Activated CD8-positive, alpha-beta T cell treated with anti-CD3 and anti-CD28 coated beads, Interleukin-2, amount 10 ng/mL, durations not matched to agents 7 days and 5 days (primary cell): ENCODE measurements at regions of chr14 and their contacts with region 1.

Region 1: GRCh38 chr14:52351233-52352060 is 37.3 kb downstream of the PTGER2 start:
- DNase-seq: peak; percentile 39
- ATAC-seq: peak; percentile 76
- H3K4me3 Mint-ChIP-seq: peak overlapping the region; percentile 80
- H3K27ac Mint-ChIP-seq: peak overlapping the region; percentile 99
- H3K4me1 Mint-ChIP-seq: peaks cover 78% of the 10 kb centered on the region
- H3K27me3 Mint-ChIP-seq: no peaks in the 10 kb centered on the region

Region 2: DNA sequence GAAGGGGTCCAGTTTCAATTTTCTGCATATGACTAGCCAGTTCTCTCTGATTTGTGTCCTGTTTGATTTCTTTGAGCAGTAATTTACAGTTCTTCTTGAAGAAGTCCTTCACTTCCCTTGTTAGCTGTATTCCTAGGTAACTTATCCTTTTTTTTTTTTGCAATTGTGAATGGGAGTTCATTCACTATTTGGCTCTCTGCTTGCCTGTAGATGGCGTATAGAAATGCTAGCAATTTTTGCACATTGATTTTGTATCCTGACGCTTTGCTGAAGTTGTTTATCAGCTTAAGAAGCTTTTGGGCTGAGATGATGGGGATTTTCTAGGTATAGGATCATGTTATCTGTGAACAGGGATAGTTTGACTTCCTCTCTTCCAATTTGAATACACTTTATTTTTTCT is 204.9 kb before region 1 on chr14:
- CTCF ChIA-PET with region 1: no interaction called
- POLR2A ChIA-PET with region 1: no interaction called
- DNase-seq: no peak
- ATAC-seq: no peak
- H3K4me3 Mint-ChIP-seq: no peak overlapping the region
- H3K27ac Mint-ChIP-seq: no peak overlapping the region
- H3K4me1 Mint-ChIP-seq: peaks cover 19% of the 10 kb centered on the region
- H3K27me3 Mint-ChIP-seq: peaks cover 4% of the 10 kb centered on the region

Region 3: GRCh38 chr14:52299692-52300278 is 51.7 kb before region 1 on chr14:
- CTCF ChIA-PET with region 1: interaction called, 19 read pairs
- POLR2A ChIA-PET with region 1: no interaction called
- DNase-seq: no peak
- ATAC-seq: peak; percentile 73
- H3K4me3 Mint-ChIP-seq: no peak overlapping the region
- H3K27ac Mint-ChIP-seq: no peak overlapping the region
- H3K4me1 Mint-ChIP-seq: peaks cover 60% of the 10 kb centered on the region
- H3K27me3 Mint-ChIP-seq: no peaks in the 10 kb centered on the region

Region 4: GRCh38 chr14:52313903-52314594 is 37.4 kb before region 1 on chr14 and contains the start of gene PTGER2:
- CTCF ChIA-PET with region 1: interaction called, 37 read pairs
- POLR2A ChIA-PET with region 1: interaction called, 120 read pairs
- DNase-seq: peak; percentile 95
- ATAC-seq: peak; percentile 83
- H3K4me3 Mint-ChIP-seq: peak within 1 kb of the TSS; percentile 97
- H3K27ac Mint-ChIP-seq: peak within 1 kb of the TSS; percentile 98
- H3K4me1 Mint-ChIP-seq: peaks cover 55% of the 10 kb centered on the region
- H3K27me3 Mint-ChIP-seq: no peaks in the 10 kb centered on the region
- total RNA-seq, gene PTGER2: 116 to 119 TPM

Region 5: GRCh38 chr14:52325126-52325525 is 26.3 kb before region 1 on chr14:
- CTCF ChIA-PET with region 1: interaction called, 7 read pairs
- POLR2A ChIA-PET with region 1: interaction called, 120 read pairs
- DNase-seq: peak; percentile 59
- ATAC-seq: peak; percentile 90
- H3K4me3 Mint-ChIP-seq: peak overlapping the region; percentile 46
- H3K27ac Mint-ChIP-seq: peak overlapping the region; percentile 83
- H3K4me1 Mint-ChIP-seq: peaks cover 95% of the 10 kb centered on the region
- H3K27me3 Mint-ChIP-seq: no peaks in the 10 kb centered on the region

Region 6: GRCh38 chr14:52338051-52338681 is 13.3 kb before region 1 on chr14:
- CTCF ChIA-PET with region 1: interaction called, 10 read pairs
- POLR2A ChIA-PET with region 1: no interaction called
- DNase-seq: no peak
- ATAC-seq: no peak
- H3K4me3 Mint-ChIP-seq: no peak overlapping the region
- H3K27ac Mint-ChIP-seq: no peak overlapping the region
- H3K4me1 Mint-ChIP-seq: peaks cover 39% of the 10 kb centered on the region
- H3K27me3 Mint-ChIP-seq: no peaks in the 10 kb centered on the region

Region 7: GRCh38 chr14:52596861-52597260 is 245.4 kb after region 1 on chr14:
- CTCF ChIA-PET with region 1: no interaction called
- POLR2A ChIA-PET with region 1: no interaction called
- DNase-seq: no peak
- ATAC-seq: no peak
- H3K4me3 Mint-ChIP-seq: no peak overlapping the region
- H3K27ac Mint-ChIP-seq: no peak overlapping the region
- H3K4me1 Mint-ChIP-seq: no peaks in the 10 kb centered on the region
- H3K27me3 Mint-ChIP-seq: peaks cover 2% of the 10 kb centered on the region